ENCODE measurements at regions of chr13 and their contacts with region 1.

Region 1: DNA sequence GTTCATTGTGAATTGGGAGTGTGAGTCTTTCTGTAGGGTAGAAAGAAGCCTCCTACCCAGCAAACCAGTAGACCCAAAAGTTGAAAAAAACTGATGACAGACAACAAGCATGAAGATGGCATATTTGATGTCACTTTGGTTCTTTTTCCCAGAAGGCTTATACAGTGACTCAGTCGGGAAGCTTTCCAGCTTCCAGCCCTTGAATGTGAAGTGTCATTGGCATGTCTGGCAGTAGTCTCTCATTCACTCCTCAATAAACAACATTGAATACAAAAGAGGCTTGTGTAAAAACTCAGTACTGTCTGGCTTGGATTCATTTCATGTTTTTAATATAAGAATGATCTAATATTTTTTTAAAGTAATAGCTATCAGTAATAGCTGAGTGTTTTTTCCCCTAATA is 68.7 kb downstream of the IPO5 start:
- DNase-seq: no peak
- ATAC-seq: peak in 3 of 4 donors; percentile 53 to 66 (median 61)
- H3K4me3 ChIP-seq: no peak overlapping the region
- H3K27ac ChIP-seq: no peak overlapping the region
- H3K4me1 ChIP-seq: no peaks in the 10 kb centered on the region
- H3K27me3 ChIP-seq: no peaks in the 10 kb centered on the region
- CTCF ChIP-seq: no peak

Region 2: DNA sequence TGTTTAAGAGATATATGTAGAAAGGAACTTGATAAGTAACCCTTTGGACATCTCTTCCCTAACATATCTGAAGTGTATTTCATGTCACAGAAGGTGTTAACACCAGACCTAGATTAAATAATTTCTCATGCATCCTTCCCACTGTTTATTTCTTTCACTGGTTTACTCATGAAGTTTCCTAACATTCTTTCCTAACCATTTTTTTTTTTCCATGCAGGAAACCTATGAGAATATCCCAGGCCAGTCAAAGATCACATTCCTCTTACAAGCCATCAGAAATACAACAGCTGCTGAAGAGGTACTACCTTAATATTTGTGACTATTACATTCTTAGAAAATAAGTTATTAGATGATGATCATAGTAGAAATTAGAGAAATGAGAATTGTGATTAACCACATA is 39.9 kb before region 1 on chr13:
- intact Hi-C with region 1: loop called (anchors 5 kb)
- DNase-seq: no peak
- ATAC-seq: no peak
- H3K4me3 ChIP-seq: no peak overlapping the region
- H3K27ac ChIP-seq: no peak overlapping the region
- H3K4me1 ChIP-seq: peaks cover 35% of the 10 kb centered on the region
- H3K27me3 ChIP-seq: no peaks in the 10 kb centered on the region
- CTCF ChIP-seq: no peak

Measured in psoas muscle (tissue), 8 donors.